Activated CD4-positive, alpha-beta T cell treated with anti-CD3 and anti-CD28 coated beads for 36 hours (primary cell): ENCODE measurements at regions of chr11 and their contacts with region 1.

Region 1: GRCh38 chr11:59142530-59143507 is at the start of gene FAM111A:
- DNase-seq: peak; percentile 90
- ATAC-seq: peak; percentile 77
- H3K4me3 Mint-ChIP-seq: peak within 1 kb of the TSS; percentile 91
- H3K27ac Mint-ChIP-seq: peak within 1 kb of the TSS; percentile 93
- H3K4me1 Mint-ChIP-seq: peaks cover 47% of the 10 kb centered on the region
- H3K27me3 Mint-ChIP-seq: no peaks in the 10 kb centered on the region
- total RNA-seq, gene FAM111A: 87.9 to 135 TPM

Region 2: GRCh38 chr11:57741132-57742086 is 1401.4 kb before region 1 on chr11 and contains the start of gene SELENOH:
- CTCF ChIA-PET with region 1: no interaction called
- POLR2A ChIA-PET with region 1: no interaction called
- intact Hi-C with region 1: loop called in 1 of 2 experiments (anchors 1 kb)
- DNase-seq: peak; percentile 98
- ATAC-seq: peak; percentile 94
- H3K4me3 Mint-ChIP-seq: peak within 1 kb of the TSS; percentile 98
- H3K27ac Mint-ChIP-seq: peak within 1 kb of the TSS; percentile 100
- H3K4me1 Mint-ChIP-seq: peaks cover 28% of the 10 kb centered on the region
- H3K27me3 Mint-ChIP-seq: no peaks in the 10 kb centered on the region
- total RNA-seq, gene SELENOH: 117 to 244 TPM

Region 3: DNA sequence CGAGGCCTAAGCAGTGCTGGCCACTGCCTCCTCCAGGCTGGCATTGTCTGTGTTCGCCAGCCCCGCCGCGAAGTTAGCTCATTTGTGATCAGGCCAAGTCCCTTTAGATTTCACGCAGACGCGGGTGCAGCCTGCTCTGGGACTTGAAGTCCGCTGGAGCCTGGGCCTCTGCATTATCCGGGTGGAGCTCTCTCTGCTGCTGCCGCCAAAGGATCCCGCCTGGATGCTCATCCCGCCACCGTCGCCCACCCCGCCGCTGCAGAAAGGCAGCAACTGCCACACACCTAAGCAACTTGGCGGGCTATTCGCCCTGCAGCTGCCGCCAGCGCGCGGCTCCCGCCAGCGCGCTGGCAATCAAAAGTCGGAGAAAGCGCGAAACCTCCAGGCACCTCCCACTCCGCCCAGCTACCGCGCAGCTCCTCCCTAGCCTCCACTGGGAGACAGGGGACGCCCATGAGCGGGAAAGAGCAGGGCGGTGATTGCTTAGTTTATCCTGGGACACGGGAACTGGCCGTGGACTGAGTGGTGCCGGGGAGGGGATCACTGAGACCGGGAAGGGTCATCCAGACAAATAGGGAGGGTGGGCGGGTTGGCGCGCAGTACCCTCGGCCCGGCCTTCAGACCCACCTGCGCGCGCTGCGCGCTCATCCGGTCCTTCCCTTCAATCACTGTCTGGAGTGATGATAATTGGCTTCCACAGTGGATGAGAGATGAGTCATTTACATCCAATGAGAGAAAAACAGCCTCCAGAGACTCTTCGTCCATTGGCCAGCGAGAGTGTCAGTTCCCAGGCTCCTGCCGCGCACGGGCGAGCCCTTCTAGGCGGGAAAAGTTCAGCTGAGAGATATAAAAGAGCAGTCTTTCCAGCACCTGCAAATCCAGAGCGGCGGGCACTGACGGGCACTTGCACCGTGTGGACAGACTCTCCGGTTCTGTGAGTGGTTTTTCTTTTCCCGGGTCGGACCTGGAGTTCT is 36.2 kb before region 1 on chr11 and contains the start of gene FAM111B:
- CTCF ChIA-PET with region 1: interaction called, 4 read pairs
- POLR2A ChIA-PET with region 1: interaction called, 7 read pairs
- intact Hi-C with region 1: loop called (anchors 1 kb)
- DNase-seq: peak; percentile 86
- ATAC-seq: peak; percentile 87
- H3K4me3 Mint-ChIP-seq: peak within 1 kb of the TSS; percentile 79
- H3K27ac Mint-ChIP-seq: peak within 1 kb of the TSS; percentile 64
- H3K4me1 Mint-ChIP-seq: peaks cover 54% of the 10 kb centered on the region
- H3K27me3 Mint-ChIP-seq: peaks cover 23% of the 10 kb centered on the region
- total RNA-seq, gene FAM111B: 32.3 to 38.9 TPM

Region 4: DNA sequence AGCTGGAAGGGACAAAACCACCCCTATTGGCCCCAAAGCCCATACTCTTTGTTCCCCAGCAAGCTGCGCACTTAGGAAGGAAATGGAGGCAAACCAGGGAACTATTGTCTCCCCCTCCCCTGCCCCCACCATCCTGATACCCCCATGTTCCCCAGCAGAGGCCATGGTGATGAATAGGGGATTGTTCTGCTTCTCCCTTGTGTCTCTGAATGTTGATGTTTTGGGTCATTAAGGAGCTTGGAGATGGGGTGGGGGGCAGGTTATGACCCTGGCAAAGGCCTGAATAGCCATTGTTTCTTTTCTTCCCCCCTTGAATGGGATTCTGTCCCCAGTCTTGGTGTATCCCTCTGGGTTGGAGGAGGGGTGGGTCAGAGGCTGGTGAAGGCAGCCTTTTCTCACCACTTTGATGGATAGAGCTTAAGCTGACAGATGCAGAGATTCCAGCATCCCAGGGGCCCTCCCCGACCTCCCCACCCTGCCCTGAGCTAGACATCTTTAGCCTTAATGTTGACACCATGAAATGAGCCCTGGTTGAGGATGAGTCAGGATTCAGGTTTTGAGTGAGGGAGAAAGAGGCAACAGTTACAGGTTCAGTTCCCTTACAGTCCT is 37.5 kb after region 1 on chr11:
- CTCF ChIA-PET with region 1: no interaction called
- POLR2A ChIA-PET with region 1: no interaction called
- intact Hi-C with region 1: no loop called
- DNase-seq: no peak
- ATAC-seq: no peak
- H3K4me3 Mint-ChIP-seq: no peak overlapping the region
- H3K27ac Mint-ChIP-seq: no peak overlapping the region
- H3K4me1 Mint-ChIP-seq: no peaks in the 10 kb centered on the region
- H3K27me3 Mint-ChIP-seq: no peaks in the 10 kb centered on the region

Region 5: DNA sequence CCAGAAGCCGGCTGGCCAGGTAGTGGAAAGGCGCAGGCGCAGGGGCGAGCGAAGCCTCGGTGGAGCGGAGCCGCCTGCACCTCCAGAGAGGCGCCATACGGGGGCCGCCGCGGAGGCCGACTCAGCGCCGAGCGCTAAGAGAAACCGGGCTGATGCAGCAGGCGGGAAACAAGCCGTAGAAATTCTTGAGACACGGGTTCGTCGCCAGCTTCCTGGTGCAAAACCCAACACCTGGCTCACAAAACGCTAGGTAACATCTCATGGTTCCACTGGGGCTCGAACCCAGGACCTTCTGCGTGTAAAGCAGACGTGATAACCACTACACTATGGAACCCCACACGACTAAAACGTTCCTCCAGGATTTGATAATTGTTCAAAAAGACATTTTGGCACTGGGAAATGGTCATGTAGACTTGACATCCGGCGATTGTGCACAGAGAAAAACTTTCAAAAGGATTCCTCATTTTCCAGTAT is 407.6 kb after region 1 on chr11:
- CTCF ChIA-PET with region 1: no interaction called
- POLR2A ChIA-PET with region 1: no interaction called
- intact Hi-C with region 1: loop called in 1 of 2 experiments (anchors 5 kb)
- DNase-seq: peak; percentile 95
- ATAC-seq: peak; percentile 91
- H3K4me3 Mint-ChIP-seq: peak overlapping the region; percentile 79
- H3K27ac Mint-ChIP-seq: peak overlapping the region; percentile 96
- H3K4me1 Mint-ChIP-seq: peaks cover 28% of the 10 kb centered on the region
- H3K27me3 Mint-ChIP-seq: peaks cover 2% of the 10 kb centered on the region

Region 6: DNA sequence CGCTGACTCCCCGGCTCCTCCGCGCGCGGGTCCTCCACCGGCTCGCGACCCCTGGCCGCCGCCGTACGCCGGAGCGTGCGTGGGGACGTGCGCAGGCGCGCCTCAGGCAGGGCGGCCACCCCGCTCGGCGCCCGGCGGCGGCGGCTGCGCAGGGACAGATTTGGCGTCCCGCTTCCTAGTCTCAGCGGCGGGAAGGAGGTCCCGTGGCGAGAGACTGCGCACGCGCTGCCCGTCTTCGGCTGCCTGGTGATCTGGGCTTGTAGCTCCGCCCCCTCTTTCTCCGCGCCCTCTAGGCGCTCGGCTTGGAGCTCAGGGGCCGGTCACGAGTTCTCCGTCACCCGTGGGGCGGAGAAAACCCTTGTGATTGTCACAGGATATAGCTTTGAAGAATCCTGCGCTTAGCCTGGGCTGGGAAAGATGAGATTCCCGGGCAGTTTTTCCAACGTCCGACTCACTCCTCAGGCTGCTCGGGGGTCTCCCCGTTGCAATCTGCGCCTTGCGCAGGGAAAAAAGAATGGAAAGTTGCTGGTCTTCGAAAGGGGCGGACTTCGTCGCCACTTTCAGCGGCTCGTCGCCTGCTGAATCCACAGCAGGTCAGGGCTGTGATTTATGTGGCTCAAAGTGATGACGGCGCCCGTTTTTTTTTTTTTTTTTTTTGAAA is 526.3 kb after region 1 on chr11 and contains the start of gene PATL1:
- CTCF ChIA-PET with region 1: no interaction called
- POLR2A ChIA-PET with region 1: no interaction called
- intact Hi-C with region 1: loop called in 1 of 2 experiments (anchors 2 kb)
- DNase-seq: peak; percentile 99
- ATAC-seq: peak; percentile 93
- H3K4me3 Mint-ChIP-seq: peak within 1 kb of the TSS; percentile 81
- H3K27ac Mint-ChIP-seq: peak within 1 kb of the TSS; percentile 92
- H3K4me1 Mint-ChIP-seq: peaks cover 37% of the 10 kb centered on the region
- H3K27me3 Mint-ChIP-seq: no peaks in the 10 kb centered on the region
- total RNA-seq, gene PATL1: 59.8 to 88.7 TPM